ENCODE measurements at regions of chr15 and their contacts with region 1.

Region 1: GRCh38 chr15:73802431-73803041 is 49.4 kb upstream of the INSYN1 start:
- DNase-seq: no peak
- ATAC-seq: no peak
- H3K4me3 ChIP-seq: no peak overlapping the region
- H3K27ac ChIP-seq: no peak overlapping the region
- H3K4me1 ChIP-seq: peaks cover 21% of the 10 kb centered on the region
- H3K27me3 ChIP-seq: peaks cover 23% of the 10 kb centered on the region
- CTCF ChIP-seq: no peak
- POLR2A ChIP-seq: no peak
- RAD21 ChIP-seq: no peak

Region 2: DNA sequence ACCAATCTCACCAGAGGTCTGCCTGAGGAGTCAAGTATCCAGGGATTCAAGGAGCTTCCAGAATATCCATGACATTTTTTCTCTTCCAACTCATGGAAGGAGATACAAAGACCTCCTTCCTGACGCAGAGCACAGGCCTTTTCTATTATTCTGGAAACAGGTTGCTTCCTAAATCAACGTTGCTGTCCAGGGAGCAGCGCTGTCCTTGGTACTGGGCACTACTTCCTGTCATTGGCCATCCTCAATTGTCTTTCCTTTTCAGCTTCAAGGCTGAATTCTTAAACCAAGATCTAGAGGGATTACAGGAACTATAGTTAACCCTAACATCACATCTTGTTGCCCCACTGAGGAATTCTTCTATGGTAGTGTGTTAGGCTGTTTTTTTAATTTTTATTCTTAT is 20.5 kb after region 1 on chr15:
- CTCF ChIA-PET with region 1: no interaction called
- POLR2A ChIA-PET with region 1: no interaction called
- dilution Hi-C with region 1: no loop called
- in situ Hi-C with region 1: no loop called
- intact Hi-C with region 1: loop called (anchors 2 kb)
- DNase-seq: peak; percentile 43
- ATAC-seq: peak; percentile 46; the same call in 1 of the 2 replicates
- H3K4me3 ChIP-seq: no peak overlapping the region
- H3K27ac ChIP-seq: no peak overlapping the region
- H3K4me1 ChIP-seq: no peaks in the 10 kb centered on the region
- H3K27me3 ChIP-seq: peaks cover 36% of the 10 kb centered on the region
- CTCF ChIP-seq: no peak
- POLR2A ChIP-seq: no peak
- RAD21 ChIP-seq: no peak

Region 3: GRCh38 chr15:74011610-74012009 is 209.1 kb after region 1 on chr15:
- CTCF ChIA-PET with region 1: no interaction called
- POLR2A ChIA-PET with region 1: no interaction called
- dilution Hi-C with region 1: no loop called
- in situ Hi-C with region 1: no loop called
- intact Hi-C with region 1: no loop called
- DNase-seq: peak; percentile 46
- ATAC-seq: peak; percentile 79
- H3K4me3 ChIP-seq: no peak overlapping the region
- H3K27ac ChIP-seq: peak overlapping the region; percentile 59; the same call in 1 of the 2 replicates
- H3K4me1 ChIP-seq: peaks cover 9% of the 10 kb centered on the region
- H3K27me3 ChIP-seq: no peaks in the 10 kb centered on the region
- CTCF ChIP-seq: no peak
- POLR2A ChIP-seq: no peak
- RAD21 ChIP-seq: no peak

Region 4: GRCh38 chr15:74235962-74236361 is 433.4 kb after region 1 on chr15 and contains the start of gene CCDC33:
- CTCF ChIA-PET with region 1: no interaction called
- POLR2A ChIA-PET with region 1: no interaction called
- dilution Hi-C with region 1: no loop called
- in situ Hi-C with region 1: no loop called
- intact Hi-C with region 1: no loop called
- DNase-seq: no peak
- ATAC-seq: no peak
- H3K4me3 ChIP-seq: no peak within 1 kb of the TSS
- H3K27ac ChIP-seq: no peak within 1 kb of the TSS
- H3K4me1 ChIP-seq: peaks cover 3% of the 10 kb centered on the region; the same call in 1 of the 2 replicates
- H3K27me3 ChIP-seq: peaks cover 42% of the 10 kb centered on the region
- CTCF ChIP-seq: no peak
- POLR2A ChIP-seq: no peak
- RAD21 ChIP-seq: no peak
- total RNA-seq, gene CCDC33: not detected in 2 replicates

Measured in IMR-90 (cell line).